ENCODE measurements at regions of chr5 and their contacts with region 1.

Region 1: DNA sequence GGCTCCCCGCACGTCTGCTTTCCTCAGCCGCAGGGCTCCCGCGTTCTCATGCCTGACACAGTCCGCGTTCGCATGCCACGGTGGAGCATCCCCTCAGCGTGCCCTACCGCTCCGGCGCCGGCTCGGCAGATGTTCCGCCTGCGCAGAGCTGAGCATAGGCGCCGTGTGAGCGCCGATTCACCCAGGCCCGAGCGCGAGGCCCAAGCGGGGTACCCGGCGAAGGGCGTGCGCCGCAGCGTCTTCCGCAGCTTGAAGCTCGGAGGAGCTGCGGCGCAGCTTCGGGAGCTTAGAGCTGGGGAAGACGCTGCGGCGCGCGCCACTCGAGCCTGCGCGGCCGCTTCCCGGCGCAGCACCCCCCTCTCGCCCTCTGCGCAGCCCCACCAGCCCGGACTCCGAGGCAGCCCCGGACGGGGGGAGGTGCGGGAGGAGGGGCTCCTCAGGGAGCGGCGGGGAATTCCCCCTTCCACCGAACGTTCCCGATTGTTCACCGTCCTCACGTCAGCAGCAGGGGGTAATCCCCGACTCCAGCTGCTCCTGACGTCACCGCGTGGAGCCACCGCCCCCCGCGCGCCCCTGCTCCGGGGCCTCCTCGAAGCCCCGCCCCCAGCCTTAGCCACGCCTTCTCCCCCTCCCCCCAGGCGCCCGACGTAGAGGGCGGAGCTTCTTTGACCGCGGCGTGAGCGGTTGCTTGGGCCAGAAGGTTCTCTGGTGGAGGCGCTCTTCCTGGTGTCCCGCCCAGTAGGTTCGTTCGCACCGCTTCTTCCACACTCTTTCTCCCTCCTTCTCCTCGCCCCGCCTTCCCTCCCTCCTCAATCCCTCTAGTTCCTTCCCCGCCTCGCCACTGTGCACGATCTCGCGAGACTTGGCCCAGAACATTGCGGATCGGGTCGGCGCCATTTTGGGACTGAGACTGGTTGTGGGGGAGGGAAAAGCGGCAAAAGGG is at the start of gene GPBP1:
- DNase-seq: peak; percentile 100
- H3K4me3 ChIP-seq: peak within 1 kb of the TSS; percentile 76 to 88 (median 86)
- H3K27ac ChIP-seq: peak within 1 kb of the TSS; percentile 95 to 100 (median 98)
- H3K4me1 ChIP-seq: peaks cover 0 to 48% (median 29%) of the 10 kb centered on the region in 4 donors
- H3K27me3 ChIP-seq: no peaks in the 10 kb centered on the region
- CTCF ChIP-seq: no peak
- EP300 ChIP-seq: peak in 2 of 4 donors; percentile 93
- POLR2A ChIP-seq: peak; percentile 66 to 80
- total RNA-seq, gene GPBP1: 52.3 to 69.2 (median 59.7) TPM

Region 2: DNA sequence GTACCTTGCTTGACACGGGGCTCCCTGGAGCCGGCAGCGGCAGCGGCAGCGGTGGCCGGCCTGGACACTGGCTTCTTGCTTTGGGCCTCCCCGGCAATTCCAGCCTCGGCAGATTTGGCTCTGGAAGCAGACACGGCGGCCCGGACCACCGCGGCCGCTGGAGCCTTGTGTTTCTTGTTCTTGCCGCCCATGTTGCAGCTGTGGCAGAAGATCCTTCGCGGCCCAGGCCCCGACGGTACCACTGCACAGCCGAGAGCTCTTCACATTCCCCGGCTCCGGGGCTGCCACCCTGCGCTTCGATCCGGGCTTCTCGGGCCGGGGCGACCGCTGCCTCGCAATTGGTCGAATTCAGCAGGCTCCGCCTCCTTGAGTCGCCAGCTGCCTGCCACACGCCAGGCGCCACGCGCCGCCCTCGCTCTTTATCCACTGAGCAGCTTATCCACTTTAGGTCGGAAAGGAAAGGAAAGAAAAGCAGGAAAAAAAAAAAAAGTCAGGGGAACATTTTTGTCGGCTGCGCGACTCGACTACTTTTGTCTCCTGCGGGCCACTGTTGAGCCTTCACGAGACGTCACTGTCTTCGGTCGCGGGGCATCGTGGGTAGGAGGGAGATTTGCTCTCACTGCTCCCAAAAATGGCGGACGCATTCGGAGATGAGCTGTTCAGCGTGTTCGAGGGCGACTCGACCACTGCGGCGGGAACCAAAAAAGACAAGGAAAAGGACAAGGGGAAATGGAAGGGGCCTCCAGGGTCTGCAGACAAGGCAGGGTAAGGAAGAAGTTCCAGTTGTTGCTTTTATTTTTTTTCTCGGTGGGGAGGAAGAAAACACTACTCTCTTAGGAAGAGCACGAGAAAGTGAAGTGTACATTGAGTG is 1865.8 kb before region 1 on chr5 and contains the starts of genes DHX29 and MTREX:
- intact Hi-C with region 1: loop called (anchors 5 kb)
- DNase-seq: peak; percentile 96
- H3K4me3 ChIP-seq: peak within 1 kb of the TSS; percentile 69 to 91 (median 78)
- H3K27ac ChIP-seq: peak within 1 kb of the TSS; percentile 95 to 96 (median 95)
- H3K4me1 ChIP-seq: peaks cover 0 to 78% (median 63%) of the 10 kb centered on the region in 4 donors
- H3K27me3 ChIP-seq: no peaks in the 10 kb centered on the region
- CTCF ChIP-seq: no peak
- EP300 ChIP-seq: peak in 1 of 4 donors; percentile 60
- POLR2A ChIP-seq: peak; percentile 46 to 48
- total RNA-seq, gene DHX29: 28.8 to 34.2 (median 31.9) TPM
- total RNA-seq, gene MTREX: 59.0 to 76.7 (median 66.6) TPM

Region 3: GRCh38 chr5:56814963-56815658 is 358.3 kb before region 1 on chr5 and contains the start of gene MAP3K1:
- intact Hi-C with region 1: loop called (anchors 5 kb)
- DNase-seq: peak; percentile 81
- H3K4me3 ChIP-seq: peak within 1 kb of the TSS; percentile 66 to 88 (median 72)
- H3K27ac ChIP-seq: peak within 1 kb of the TSS; percentile 84 to 93 (median 86)
- H3K4me1 ChIP-seq: peaks cover 0 to 9% (median 3%) of the 10 kb centered on the region in 4 donors
- H3K27me3 ChIP-seq: no peaks in the 10 kb centered on the region
- CTCF ChIP-seq: no peak
- EP300 ChIP-seq: no peak
- POLR2A ChIP-seq: peak in 1 of 2 donors; percentile 31
- total RNA-seq, gene MAP3K1: 7.2 to 12.5 (median 10.3) TPM

Region 4: GRCh38 chr5:56909294-56910209 is 263.9 kb before region 1 on chr5 and contains the start of gene SETD9:
- intact Hi-C with region 1: loop called (anchors 2 kb)
- DNase-seq: peak; percentile 99
- H3K4me3 ChIP-seq: peak within 1 kb of the TSS; percentile 54 to 73 (median 69)
- H3K27ac ChIP-seq: peak within 1 kb of the TSS; percentile 90 to 98 (median 96)
- H3K4me1 ChIP-seq: peaks cover 0 to 9% (median 7%) of the 10 kb centered on the region in 4 donors
- H3K27me3 ChIP-seq: no peaks in the 10 kb centered on the region
- CTCF ChIP-seq: no peak
- EP300 ChIP-seq: no peak
- POLR2A ChIP-seq: peak; percentile 68 to 69
- total RNA-seq, gene SETD9: 6.6 to 30.7 (median 19.4) TPM

Region 5: DNA sequence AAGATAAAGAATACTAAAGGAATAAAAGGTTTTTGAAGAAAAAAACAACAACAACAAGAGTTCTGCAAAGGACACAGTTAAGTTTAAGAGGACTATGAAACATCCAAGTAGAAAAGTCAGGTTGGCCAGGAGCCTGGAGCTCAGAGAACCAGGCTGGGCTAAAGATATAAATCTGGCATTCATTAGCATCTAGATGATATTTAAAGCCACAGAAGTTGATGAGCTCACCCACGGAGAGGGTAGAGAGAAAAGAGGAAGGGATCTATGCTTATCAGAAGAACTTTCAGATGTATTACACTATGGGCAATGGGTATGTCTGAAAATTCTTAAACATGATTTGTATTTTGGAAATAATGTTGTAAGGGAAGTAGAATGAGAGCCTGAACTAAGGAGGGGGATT is 231.5 kb before region 1 on chr5:
- intact Hi-C with region 1: no loop called
- DNase-seq: no peak
- H3K4me3 ChIP-seq: no peak overlapping the region
- H3K27ac ChIP-seq: no peak overlapping the region
- H3K4me1 ChIP-seq: no peaks in the 10 kb centered on the region
- H3K27me3 ChIP-seq: no peaks in the 10 kb centered on the region
- CTCF ChIP-seq: no peak
- EP300 ChIP-seq: no peak
- POLR2A ChIP-seq: no peak

Region 6: DNA sequence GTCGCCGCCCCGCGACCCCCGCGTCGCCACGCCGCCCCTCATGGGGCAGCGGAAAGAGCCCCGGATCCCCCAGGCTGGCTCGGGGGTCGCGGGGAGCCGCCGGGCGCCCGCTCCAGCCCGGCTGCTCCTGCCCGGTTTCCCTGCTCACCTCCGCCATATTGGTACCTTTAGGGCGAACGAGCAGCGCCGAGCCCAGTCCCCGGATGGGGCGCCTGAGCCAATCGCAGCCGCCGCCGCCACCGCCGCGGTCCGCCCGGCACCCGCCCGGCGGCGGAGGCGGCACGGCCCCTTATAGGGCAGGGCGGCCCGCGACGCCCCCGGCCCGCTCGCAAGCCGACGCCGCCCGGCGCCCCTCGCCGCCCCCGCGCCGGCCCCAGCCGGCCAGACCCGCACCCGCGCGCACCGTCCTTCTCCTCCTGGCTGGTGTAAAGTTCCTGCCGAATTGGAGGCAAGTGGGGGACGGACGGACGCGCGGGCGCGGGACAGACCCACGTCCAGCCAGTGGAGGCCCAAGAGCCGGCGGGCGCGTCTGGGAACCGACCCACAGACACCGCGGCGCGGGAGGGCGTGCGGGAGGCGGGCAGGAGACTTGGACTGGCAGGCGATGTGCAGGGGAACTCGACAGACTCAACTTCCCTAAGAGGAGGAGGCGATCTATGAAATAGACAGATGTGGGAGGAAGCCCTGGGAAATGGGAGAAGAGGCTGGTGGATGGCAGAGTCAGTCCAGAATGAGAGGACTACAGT is 221.3 kb before region 1 on chr5 and contains the start of gene MIER3:
- intact Hi-C with region 1: loop called (anchors 2 kb)
- DNase-seq: peak; percentile 88
- H3K4me3 ChIP-seq: peak within 1 kb of the TSS; percentile 70 to 95 (median 93)
- H3K27ac ChIP-seq: peak within 1 kb of the TSS; percentile 87 to 95 (median 92)
- H3K4me1 ChIP-seq: peaks cover 0 to 21% (median 16%) of the 10 kb centered on the region in 4 donors
- H3K27me3 ChIP-seq: no peaks in the 10 kb centered on the region
- CTCF ChIP-seq: no peak
- EP300 ChIP-seq: no peak
- POLR2A ChIP-seq: no peak
- total RNA-seq, gene MIER3: 12.5 to 46.4 (median 21.7) TPM

Region 7: GRCh38 chr5:57137401-57137800 is 36.1 kb before region 1 on chr5:
- intact Hi-C with region 1: no loop called
- DNase-seq: no peak
- H3K4me3 ChIP-seq: no peak overlapping the region
- H3K27ac ChIP-seq: no peak overlapping the region
- H3K4me1 ChIP-seq: no peaks in the 10 kb centered on the region
- H3K27me3 ChIP-seq: no peaks in the 10 kb centered on the region
- CTCF ChIP-seq: no peak
- EP300 ChIP-seq: no peak
- POLR2A ChIP-seq: no peak

Region 8: GRCh38 chr5:57221049-57221568 is 47.7 kb after region 1 on chr5:
- intact Hi-C with region 1: loop called (anchors 2 kb)
- DNase-seq: no peak
- H3K4me3 ChIP-seq: no peak overlapping the region
- H3K27ac ChIP-seq: peak overlapping the region in 1 of 4 donors; percentile 17
- H3K4me1 ChIP-seq: peaks cover 0 to 10% (median 5%) of the 10 kb centered on the region in 4 donors
- H3K27me3 ChIP-seq: no peaks in the 10 kb centered on the region
- CTCF ChIP-seq: peak; percentile 77 to 94 (median 86)
- EP300 ChIP-seq: no peak
- POLR2A ChIP-seq: no peak